ENCODE measurements at regions of chr3 and their contacts with region 1.

Region 1: GRCh38 chr3:126679318-126679751 is 24.4 kb upstream of the TXNRD3 start:
- DNase-seq: peak; percentile 52 to 81 (median 62)
- H3K4me3 ChIP-seq: no peak overlapping the region
- H3K4me3 Mint-ChIP-seq: peak overlapping the region in 3 of 7 donors; percentile 10 to 83 (median 37)
- H3K27ac ChIP-seq: no peak overlapping the region
- H3K27ac Mint-ChIP-seq: peak overlapping the region in 3 of 8 donors; percentile 7 to 32 (median 19)
- H3K4me1 ChIP-seq: peaks cover 4% of the 10 kb centered on the region
- H3K4me1 Mint-ChIP-seq: peaks cover 3 to 6% (median 4%) of the 10 kb centered on the region in 3 donors
- H3K27me3 ChIP-seq: peaks cover 7% of the 10 kb centered on the region
- H3K27me3 Mint-ChIP-seq: peaks cover 16 to 40% of the 10 kb centered on the region in 2 donors

Region 2: GRCh38 chr3:126668450-126669401 is 10.6 kb before region 1 on chr3:
- CTCF ChIA-PET with region 1: interaction called, 11 read pairs
- POLR2A ChIA-PET with region 1: no interaction called
- DNase-seq: no peak
- H3K4me3 ChIP-seq: no peak overlapping the region
- H3K4me3 Mint-ChIP-seq: no peak overlapping the region
- H3K27ac ChIP-seq: no peak overlapping the region
- H3K27ac Mint-ChIP-seq: no peak overlapping the region
- H3K4me1 ChIP-seq: no peaks in the 10 kb centered on the region
- H3K4me1 Mint-ChIP-seq: no peaks in the 10 kb centered on the region
- H3K27me3 ChIP-seq: no peaks in the 10 kb centered on the region
- H3K27me3 Mint-ChIP-seq: peaks cover 3 to 11% of the 10 kb centered on the region in 2 donors

Region 3: GRCh38 chr3:126692845-126693244 is 13.5 kb after region 1 on chr3:
- CTCF ChIA-PET with region 1: interaction called, 16 read pairs
- POLR2A ChIA-PET with region 1: no interaction called
- DNase-seq: no peak
- H3K4me3 ChIP-seq: no peak overlapping the region
- H3K4me3 Mint-ChIP-seq: no peak overlapping the region
- H3K27ac ChIP-seq: no peak overlapping the region
- H3K27ac Mint-ChIP-seq: no peak overlapping the region
- H3K4me1 ChIP-seq: no peaks in the 10 kb centered on the region
- H3K4me1 Mint-ChIP-seq: no peaks in the 10 kb centered on the region
- H3K27me3 ChIP-seq: no peaks in the 10 kb centered on the region
- H3K27me3 Mint-ChIP-seq: peaks cover 27 to 81% of the 10 kb centered on the region in 2 donors

Region 4: DNA sequence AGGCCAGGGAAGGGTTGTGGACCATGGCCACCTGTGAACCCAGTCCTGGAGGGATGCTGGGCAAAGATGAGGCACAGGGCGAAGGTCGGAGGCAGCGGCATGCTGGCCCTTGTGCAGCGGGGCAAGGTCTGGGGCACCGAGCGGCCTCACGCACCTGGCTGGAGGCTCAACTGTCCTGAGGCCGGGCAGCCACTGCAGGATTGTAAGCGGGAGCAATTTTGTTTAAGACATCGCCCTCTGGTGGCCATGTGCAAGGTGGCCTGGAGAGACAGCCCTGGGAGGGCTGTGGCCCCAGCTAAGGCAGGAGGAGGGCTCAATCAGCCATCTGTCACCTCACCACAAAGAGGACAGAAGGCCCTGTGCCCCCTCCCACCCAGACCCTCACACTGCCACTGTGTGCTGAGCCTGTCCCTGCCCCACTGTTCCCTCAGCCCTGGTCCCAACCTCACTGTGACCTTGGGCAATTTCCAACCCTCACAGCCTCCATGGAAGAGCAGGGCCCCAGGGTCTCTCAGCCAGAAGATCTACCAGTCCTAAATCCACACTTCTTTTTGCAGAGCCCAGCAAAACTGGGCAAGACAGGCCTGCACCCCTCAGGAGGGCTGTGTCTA is 865.0 kb after region 1 on chr3:
- CTCF ChIA-PET with region 1: interaction called, 79 read pairs
- POLR2A ChIA-PET with region 1: no interaction called
- DNase-seq: peak; percentile 33 to 74 (median 42)
- H3K4me3 ChIP-seq: no peak overlapping the region
- H3K4me3 Mint-ChIP-seq: peak overlapping the region in 2 of 7 donors; percentile 13 to 42
- H3K27ac ChIP-seq: no peak overlapping the region
- H3K27ac Mint-ChIP-seq: peak overlapping the region in 1 of 8 donors; percentile 15
- H3K4me1 ChIP-seq: peaks cover 2% of the 10 kb centered on the region
- H3K4me1 Mint-ChIP-seq: peaks cover 4 to 13% (median 5%) of the 10 kb centered on the region in 3 donors
- H3K27me3 ChIP-seq: no peaks in the 10 kb centered on the region
- H3K27me3 Mint-ChIP-seq: peaks cover 1 to 7% of the 10 kb centered on the region in 2 donors